ENCODE measurements at regions of chr14 and their contacts with region 1.

Region 1: DNA sequence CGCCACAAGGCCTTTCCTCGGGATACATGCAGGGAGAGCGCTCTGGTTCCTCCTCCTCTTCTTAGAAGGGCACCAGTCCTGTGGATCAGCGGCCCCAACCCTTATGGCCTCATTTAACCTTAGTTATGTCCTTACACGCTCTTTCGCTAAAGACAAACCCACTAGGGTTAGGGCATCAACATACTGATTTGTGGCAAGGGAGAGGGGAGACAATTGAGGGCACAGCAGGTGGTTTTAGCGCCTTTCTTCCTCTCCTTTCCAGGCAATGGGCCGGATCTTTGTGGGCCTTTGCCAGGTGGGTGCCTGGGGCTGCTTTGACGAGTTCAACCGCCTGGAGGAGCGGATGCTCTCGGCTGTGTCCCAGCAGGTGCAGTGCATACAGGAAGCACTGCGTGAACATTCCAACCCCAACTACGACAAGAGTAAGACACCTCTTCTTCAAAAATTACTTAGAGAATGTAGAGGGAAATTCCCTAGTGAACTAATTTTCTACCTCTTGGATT is 43.6 kb downstream of the DYNC1H1 start:
- DNase-seq: no peak
- ATAC-seq: no peak

Region 2: DNA sequence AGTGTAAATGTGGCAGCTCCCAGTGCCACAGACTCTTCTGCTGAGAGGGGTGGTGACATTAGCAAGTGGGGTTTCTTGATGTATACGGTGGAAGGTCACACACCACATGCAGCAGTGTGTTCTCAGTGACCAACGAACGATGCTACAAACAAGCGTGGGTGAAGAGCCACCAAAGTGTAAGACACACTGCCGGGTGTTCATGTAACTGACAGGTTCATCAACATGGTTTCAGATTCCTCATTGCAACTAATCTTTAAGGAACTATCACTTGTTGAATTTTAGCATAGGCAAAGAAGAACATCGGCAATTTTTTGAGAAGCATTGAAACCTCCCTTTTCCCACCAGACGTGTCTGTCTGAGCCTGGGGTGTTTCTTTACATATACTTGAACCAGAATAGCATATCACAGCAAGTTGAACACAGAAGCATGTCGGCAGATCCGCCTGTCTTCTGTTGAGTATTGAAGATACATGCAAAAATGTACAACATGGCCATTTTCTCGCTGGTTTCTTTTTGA is 187.6 kb before region 1 on chr14:
- intact Hi-C with region 1: no loop called
- DNase-seq: no peak
- ATAC-seq: no peak

Region 3: DNA sequence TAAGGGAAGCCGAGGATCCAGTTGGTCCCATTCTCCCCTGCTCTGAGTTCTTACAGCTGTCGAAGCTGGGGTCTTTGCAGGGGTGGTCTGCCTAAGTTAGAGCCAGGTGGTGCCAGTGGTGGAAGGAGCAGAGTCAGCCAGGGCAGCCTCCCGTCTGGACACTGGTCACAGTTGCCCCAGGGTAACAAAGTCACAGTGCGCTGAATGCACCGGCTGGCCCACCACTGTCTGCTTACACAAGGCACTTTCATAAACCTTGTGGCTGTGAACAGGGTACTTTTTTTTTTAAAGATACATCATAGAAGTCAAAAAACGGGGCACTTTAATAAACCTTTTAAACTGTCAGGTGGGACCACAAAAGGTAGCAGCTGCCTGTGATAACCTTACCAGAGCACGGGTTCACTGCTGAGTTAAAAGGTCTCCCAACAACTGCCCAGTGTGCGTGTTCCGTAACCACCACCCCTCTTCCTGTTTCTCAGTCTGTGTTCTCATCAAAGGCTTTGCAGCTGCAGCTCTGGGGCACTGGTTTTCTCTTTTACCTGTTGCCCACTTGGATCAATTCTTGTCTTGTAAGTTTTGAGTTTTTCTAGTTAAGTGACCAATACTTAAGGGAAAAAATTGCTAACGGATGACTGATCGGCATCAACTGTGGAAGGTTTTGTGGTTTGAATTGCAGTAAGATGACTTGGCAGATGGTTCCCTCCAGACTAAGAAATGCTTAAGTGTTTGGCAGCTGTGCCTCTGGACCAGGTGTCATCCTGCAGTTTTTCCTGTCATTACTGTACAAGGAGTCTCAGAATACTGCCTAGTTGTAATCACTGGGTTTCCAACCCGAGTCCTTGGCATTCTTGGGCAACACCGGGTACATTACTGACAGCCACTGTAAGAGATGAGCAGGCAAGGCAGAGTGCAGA is 12.3 kb after region 1 on chr14:
- intact Hi-C with region 1: no loop called
- DNase-seq: no peak
- ATAC-seq: no peak

Region 4: GRCh38 chr14:102046343-102047278 is 38.6 kb after region 1 on chr14:
- intact Hi-C with region 1: loop called (anchors 1 kb)
- DNase-seq: peak; percentile 87
- ATAC-seq: peak; percentile 90

Region 5: DNA sequence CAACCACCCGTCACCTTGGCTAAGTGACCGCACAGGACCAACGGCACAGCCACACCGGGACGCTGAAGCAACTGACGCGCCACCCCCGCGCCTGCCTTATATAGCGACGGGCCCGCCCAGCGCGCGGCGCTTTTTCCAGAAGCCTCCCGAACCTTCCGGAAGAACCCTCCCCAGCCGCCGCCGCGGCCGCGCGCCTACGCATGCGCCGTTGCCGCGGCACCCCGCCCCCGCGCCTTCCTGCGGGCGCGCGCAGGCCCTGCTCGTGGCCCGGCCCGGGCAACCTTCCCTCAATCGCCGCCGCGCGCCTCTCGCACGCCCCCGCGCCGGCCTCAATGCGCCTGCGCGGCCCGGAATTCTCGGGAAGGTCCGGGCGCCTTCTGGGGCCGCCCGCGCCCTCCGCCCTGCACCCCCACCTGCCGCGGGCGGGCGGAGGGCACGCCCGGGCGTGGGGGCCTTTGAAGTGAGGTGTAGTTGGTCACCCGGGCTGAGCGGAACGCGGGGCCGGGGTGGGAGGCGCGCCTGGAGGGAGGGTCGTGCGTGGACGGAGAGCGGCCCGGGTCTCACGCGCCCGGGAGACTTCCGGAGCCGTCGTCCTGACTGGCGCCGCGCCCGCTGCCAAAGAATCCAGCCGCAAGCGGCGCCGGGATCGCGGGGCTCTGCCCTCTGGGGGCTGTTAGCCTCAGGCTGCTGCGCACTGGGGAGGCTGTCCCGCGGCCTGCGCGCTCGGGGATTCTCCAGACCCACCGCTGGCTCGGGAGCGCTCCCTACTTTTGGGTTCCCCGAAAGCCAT is 79.2 kb after region 1 on chr14 and contains the start of gene HSP90AA1:
- intact Hi-C with region 1: no loop called
- DNase-seq: peak; percentile 98
- ATAC-seq: peak; percentile 88
- total RNA-seq, gene HSP90AA1: 325 TPM

Region 6: DNA sequence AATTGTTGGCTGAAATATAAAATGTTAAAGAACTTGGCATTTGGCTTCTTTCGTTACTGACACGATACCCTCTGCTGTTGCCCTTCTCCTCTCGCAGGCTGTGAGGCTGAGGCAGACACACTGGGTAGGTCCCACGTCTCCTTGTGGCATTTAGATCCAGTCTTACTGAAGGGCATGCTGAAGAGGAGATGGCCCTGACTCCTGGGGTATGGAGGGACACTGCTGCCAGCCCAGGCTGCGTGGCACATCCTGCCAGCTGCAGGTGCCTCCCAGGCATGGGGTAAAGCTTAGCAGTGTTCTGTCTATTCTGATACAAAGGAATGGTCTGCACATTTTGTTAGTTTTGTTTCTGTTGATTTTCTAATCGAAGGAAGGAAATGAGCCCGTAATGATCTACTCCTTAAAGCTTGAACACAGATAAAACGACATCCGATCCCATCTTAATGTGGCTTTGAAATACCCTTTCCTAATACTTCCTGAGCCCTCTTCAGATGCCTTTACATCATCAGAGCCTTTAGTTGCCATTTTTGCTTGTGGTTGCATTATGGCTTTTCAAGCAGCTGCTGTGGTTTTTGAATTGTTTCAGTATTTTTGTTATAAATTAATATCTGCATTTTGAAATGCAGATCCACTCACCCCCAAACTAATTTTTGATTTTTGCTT is 192.9 kb after region 1 on chr14:
- intact Hi-C with region 1: no loop called
- DNase-seq: no peak
- ATAC-seq: no peak

Measured in sciatic nerve (tissue), 2 donors.